IMR-90 (cell line): ENCODE measurements at regions of chr9 and their contacts with region 1.

Region 1: GRCh38 chr9:133726401-133727276 is 11.5 kb downstream of the SARDH start:
- DNase-seq: peak; percentile 50
- ATAC-seq: peak; percentile 94
- H3K4me3 ChIP-seq: no peak overlapping the region
- H3K27ac ChIP-seq: no peak overlapping the region
- H3K4me1 ChIP-seq: no peaks in the 10 kb centered on the region
- H3K27me3 ChIP-seq: peaks cover 1% of the 10 kb centered on the region; the same call in 1 of the 2 replicates
- CTCF ChIP-seq: peak; percentile 67
- POLR2A ChIP-seq: no peak
- RAD21 ChIP-seq: peak; percentile 86

Region 2: GRCh38 chr9:133406480-133407307 is 319.9 kb before region 1 on chr9:
- CTCF ChIA-PET with region 1: no interaction called
- POLR2A ChIA-PET with region 1: no interaction called
- dilution Hi-C with region 1: no loop called
- in situ Hi-C with region 1: loop called (anchors 10 kb)
- intact Hi-C with region 1: no loop called
- DNase-seq: peak; percentile 70
- ATAC-seq: peak; percentile 96
- H3K4me3 ChIP-seq: no peak overlapping the region
- H3K27ac ChIP-seq: no peak overlapping the region
- H3K4me1 ChIP-seq: peaks cover 2% of the 10 kb centered on the region; the same call in 1 of the 2 replicates
- H3K27me3 ChIP-seq: no peaks in the 10 kb centered on the region
- CTCF ChIP-seq: peak; percentile 86
- POLR2A ChIP-seq: no peak
- RAD21 ChIP-seq: peak; percentile 64

Region 3: DNA sequence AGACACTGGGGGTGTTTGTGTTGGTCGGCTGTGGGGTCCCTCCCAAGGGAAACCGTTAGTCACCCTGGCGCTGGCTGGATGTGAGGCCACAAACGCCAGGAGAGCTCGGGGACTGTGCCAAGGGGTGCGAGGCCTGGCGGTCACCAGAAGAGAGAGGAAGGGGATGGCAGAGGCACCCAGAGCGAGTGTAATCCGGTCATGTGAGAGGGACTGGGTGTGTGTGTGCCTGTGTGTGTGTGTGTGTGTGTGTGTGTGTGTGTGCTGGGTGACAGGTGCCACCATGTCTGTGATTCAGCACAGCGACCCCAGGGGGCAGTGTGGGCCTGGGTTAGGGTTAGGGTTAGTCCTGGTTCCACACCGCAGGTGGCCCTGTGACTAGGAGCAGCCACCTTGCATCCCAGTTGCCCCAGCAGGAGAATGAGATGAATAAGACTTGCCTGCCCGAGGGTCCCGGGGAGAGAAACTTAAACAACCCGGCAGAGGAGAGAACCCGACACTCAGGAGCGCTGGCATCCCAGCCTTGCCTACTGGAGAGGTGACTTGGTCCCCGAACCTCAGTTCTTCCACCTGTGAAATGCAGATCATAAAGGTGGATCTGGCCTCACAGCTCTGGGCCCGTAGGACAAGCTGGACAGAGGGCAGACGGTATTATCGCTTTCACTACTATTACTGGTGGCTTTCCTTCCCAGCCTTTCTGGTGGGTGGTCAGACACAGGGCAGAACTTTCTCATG is 193.5 kb before region 1 on chr9:
- CTCF ChIA-PET with region 1: interaction called, 3 read pairs
- POLR2A ChIA-PET with region 1: no interaction called
- dilution Hi-C with region 1: no loop called
- in situ Hi-C with region 1: loop called (anchors 10 kb)
- intact Hi-C with region 1: loop called (anchors 1 kb)
- DNase-seq: peak; percentile 29
- ATAC-seq: peak; percentile 38; the same call in 1 of the 2 replicates
- H3K4me3 ChIP-seq: no peak overlapping the region
- H3K27ac ChIP-seq: no peak overlapping the region
- H3K4me1 ChIP-seq: peaks cover 1% of the 10 kb centered on the region; the same call in 1 of the 2 replicates
- H3K27me3 ChIP-seq: peaks cover 64% of the 10 kb centered on the region
- CTCF ChIP-seq: peak; percentile 58
- POLR2A ChIP-seq: no peak
- RAD21 ChIP-seq: peak; percentile 78

Region 4: DNA sequence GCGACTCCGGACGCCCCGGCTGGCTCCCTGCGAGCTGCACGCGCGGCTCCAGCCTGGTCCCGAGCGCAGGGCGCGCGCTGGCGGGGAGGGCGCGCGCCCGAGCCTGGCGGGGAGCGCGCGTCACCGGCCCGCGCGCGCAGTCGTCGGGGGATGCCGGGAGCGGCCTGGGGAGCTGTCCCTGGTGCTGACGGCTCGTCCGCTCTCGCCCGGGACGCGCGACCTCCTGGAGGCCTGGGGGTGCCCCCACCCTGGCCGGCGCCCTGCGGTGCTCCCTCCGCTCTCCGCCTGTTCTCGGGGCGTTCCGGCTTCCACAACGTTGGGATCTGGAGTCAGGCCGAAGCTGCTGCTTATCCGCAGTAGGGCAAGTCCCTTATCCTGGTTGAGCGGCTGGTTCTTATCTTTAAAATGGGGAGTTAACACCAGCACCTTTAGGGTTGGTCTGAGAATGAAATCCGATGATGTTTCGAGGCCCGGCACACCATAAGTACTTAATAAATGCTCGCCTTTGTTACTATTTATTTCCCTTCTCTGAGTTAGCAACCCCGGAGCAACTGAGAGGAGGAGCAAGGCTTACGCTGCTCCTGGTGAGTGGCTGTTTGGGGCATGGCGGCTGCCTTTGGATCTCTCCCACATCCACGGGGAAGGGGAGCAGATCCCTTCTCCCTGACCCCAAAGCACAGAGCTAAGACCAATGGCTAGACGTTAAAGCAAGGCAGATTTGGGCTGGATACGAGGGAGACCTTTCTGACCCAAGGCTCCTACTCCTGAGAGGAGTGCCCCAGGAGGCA is 117.1 kb before region 1 on chr9 and contains the start of gene FAM163B:
- CTCF ChIA-PET with region 1: no interaction called
- POLR2A ChIA-PET with region 1: no interaction called
- dilution Hi-C with region 1: no loop called
- in situ Hi-C with region 1: no loop called
- intact Hi-C with region 1: loop called (anchors 10 kb)
- DNase-seq: peak; percentile 22
- ATAC-seq: peak; percentile 97
- H3K4me3 ChIP-seq: no peak within 1 kb of the TSS
- H3K27ac ChIP-seq: no peak within 1 kb of the TSS
- H3K4me1 ChIP-seq: no peaks in the 10 kb centered on the region
- H3K27me3 ChIP-seq: peaks cover 66% of the 10 kb centered on the region
- CTCF ChIP-seq: no peak
- POLR2A ChIP-seq: no peak
- RAD21 ChIP-seq: no peak
- total RNA-seq, gene FAM163B: not detected in 2 replicates

Region 5: DNA sequence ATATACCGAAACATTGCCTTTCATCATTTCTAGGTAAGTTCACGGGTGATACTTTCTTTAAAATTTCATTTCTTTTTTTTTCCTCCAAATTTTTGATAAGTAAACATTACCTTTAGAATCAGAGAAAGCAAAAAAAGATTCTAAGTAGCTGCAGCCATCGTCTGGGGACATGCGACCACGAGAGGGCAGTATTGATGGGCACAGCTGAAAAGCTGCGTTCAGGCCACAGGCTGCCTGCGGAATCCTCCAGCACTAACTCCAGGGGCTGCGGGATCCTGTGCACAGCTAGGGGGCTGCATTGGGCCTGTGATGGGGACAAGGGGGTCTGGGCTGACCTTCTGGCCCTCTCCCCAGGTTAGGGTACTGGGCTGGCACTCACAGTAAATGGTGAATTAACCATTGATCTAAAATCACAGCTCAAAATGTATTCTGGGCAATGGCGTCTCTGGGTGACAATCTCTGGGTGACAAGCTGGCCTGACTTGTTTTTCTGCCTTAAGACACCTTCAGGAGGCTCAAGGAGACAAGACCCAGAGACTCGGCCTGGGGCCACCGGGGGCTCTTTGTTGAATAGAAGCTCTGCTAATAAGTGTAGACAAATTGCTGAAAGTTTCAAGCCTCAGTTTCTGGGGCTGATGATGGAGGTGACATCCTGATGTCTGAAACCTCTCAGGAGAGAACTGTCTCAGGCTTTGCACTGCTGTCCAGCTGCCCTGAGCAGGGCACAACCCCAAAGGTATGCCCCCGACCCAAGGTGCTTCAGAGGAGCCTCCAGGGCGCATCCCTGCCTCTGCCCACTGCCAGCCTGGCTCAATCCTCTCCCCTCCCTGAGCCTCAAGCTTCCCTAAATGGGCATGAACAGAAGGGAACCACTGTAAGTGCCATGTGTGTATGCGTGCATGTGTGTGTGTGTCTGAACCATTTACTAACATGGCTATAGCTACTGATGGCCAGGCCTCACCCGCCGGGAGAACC is 55.8 kb after region 1 on chr9:
- CTCF ChIA-PET with region 1: no interaction called
- POLR2A ChIA-PET with region 1: no interaction called
- dilution Hi-C with region 1: no loop called
- in situ Hi-C with region 1: no loop called
- intact Hi-C with region 1: no loop called
- DNase-seq: peak; percentile 62
- ATAC-seq: peak; percentile 96
- H3K4me3 ChIP-seq: no peak overlapping the region
- H3K27ac ChIP-seq: no peak overlapping the region
- H3K4me1 ChIP-seq: no peaks in the 10 kb centered on the region
- H3K27me3 ChIP-seq: no peaks in the 10 kb centered on the region
- CTCF ChIP-seq: peak; percentile 84
- POLR2A ChIP-seq: no peak
- RAD21 ChIP-seq: peak; percentile 72

Region 6: DNA sequence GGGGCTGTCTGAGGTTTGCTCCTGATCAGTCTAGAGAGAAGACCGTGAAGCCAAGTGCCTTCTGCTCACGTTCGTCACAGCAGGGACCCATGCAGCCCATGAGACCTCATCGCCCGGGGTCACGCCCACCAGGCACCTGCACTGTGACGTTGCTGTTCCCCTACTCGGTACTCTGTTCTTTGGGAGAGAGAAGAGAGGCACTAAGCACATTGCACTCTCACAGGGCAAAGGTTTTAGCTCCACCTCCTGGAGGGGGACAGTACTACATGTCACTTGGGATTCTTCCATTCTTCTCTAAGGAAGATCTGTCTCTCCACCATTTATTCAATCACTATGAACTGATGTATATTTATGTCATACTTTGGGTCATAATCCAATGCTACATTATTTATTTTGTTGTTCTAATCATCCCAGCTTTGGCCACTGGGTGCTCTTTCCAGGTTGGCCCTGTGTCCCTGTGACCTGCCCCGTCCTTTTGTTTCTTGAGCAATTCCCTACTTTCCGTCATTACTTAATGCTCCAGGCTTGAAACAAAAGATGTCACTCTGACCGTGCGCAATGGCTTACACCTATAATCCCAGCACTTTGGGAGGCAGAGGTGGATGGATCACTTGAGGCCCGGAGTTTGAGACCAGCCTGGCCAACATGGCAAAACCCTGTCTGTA is 372.6 kb after region 1 on chr9:
- CTCF ChIA-PET with region 1: no interaction called
- POLR2A ChIA-PET with region 1: no interaction called
- dilution Hi-C with region 1: no loop called
- in situ Hi-C with region 1: no loop called
- intact Hi-C with region 1: no loop called
- DNase-seq: peak; percentile 8
- ATAC-seq: peak; percentile 65
- H3K4me3 ChIP-seq: no peak overlapping the region
- H3K27ac ChIP-seq: no peak overlapping the region
- H3K4me1 ChIP-seq: no peaks in the 10 kb centered on the region
- H3K27me3 ChIP-seq: peaks cover 13% of the 10 kb centered on the region
- CTCF ChIP-seq: peak; percentile 57
- POLR2A ChIP-seq: no peak
- RAD21 ChIP-seq: peak; percentile 63

Region 7: DNA sequence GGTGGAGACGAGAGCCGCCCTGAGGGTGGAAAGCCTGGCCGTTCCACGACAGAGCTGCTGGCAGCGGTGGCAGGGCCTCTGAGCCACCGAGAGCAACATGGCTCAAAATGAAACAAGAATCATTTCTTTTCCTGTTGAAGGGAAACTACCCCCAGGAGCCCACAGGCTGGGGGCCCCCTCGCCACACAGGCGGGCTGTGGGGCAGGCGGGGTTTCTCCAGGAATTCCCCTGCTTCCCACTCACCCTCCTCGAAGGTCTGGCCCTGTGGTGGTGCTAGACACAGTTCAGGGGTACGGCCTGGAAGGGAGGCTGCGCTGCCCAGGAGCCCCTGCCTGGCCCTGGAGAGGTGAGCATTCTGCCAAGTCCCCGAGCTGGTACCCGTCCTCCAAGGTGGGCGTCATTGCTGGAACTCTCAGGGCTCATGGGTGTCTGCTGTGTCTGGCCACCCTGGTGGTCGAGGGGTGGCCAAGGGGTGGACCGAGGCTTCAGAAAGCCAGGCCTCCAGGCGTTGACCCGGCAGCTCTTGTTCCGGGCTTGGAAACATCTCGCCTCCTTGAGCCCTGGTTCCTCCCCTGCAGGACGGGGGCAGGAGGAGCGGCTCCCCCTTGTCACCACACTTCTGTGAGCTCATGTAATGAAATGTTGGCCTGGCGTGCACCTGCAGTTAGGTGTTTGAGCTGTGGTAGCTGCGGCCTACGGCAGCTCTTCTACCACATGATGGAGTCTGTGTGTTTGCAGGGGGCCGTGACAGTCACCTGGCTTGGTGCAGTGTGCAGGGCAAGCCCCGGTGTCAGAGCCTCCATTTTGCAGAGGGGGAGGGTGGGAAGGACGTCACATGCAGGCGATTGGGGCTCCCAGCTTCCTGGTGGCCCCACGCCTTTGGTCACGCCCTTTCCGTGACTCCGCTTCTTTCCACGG is 664.9 kb after region 1 on chr9:
- CTCF ChIA-PET with region 1: no interaction called
- POLR2A ChIA-PET with region 1: no interaction called
- dilution Hi-C with region 1: no loop called
- in situ Hi-C with region 1: no loop called
- intact Hi-C with region 1: no loop called
- DNase-seq: no peak
- ATAC-seq: no peak
- H3K4me3 ChIP-seq: no peak overlapping the region
- H3K27ac ChIP-seq: no peak overlapping the region
- H3K4me1 ChIP-seq: peaks cover 17% of the 10 kb centered on the region
- H3K27me3 ChIP-seq: no peaks in the 10 kb centered on the region
- CTCF ChIP-seq: no peak
- POLR2A ChIP-seq: no peak
- RAD21 ChIP-seq: no peak